CD4-positive, alpha-beta T cell (primary cell): ENCODE measurements at regions of chr17 and their contacts with region 1.

Region 1: GRCh38 chr17:77444984-77445759 is 304.4 kb downstream of the SEC14L1 start:
- DNase-seq: peak; percentile 72 to 97 (median 83)
- ATAC-seq: peak; percentile 68
- H3K4me3 ChIP-seq: peak overlapping the region; percentile 55
- H3K4me3 Mint-ChIP-seq: peak overlapping the region; percentile 89
- H3K27ac ChIP-seq: peak overlapping the region; percentile 73 to 98
- H3K27ac Mint-ChIP-seq: peak overlapping the region; percentile 93
- H3K4me1 ChIP-seq: peaks cover 100% of the 10 kb centered on the region
- H3K4me1 Mint-ChIP-seq: peaks cover 98% of the 10 kb centered on the region
- H3K27me3 ChIP-seq: no peaks in the 10 kb centered on the region
- H3K27me3 Mint-ChIP-seq: no peaks in the 10 kb centered on the region
- CTCF ChIP-seq: no peak

Region 2: DNA sequence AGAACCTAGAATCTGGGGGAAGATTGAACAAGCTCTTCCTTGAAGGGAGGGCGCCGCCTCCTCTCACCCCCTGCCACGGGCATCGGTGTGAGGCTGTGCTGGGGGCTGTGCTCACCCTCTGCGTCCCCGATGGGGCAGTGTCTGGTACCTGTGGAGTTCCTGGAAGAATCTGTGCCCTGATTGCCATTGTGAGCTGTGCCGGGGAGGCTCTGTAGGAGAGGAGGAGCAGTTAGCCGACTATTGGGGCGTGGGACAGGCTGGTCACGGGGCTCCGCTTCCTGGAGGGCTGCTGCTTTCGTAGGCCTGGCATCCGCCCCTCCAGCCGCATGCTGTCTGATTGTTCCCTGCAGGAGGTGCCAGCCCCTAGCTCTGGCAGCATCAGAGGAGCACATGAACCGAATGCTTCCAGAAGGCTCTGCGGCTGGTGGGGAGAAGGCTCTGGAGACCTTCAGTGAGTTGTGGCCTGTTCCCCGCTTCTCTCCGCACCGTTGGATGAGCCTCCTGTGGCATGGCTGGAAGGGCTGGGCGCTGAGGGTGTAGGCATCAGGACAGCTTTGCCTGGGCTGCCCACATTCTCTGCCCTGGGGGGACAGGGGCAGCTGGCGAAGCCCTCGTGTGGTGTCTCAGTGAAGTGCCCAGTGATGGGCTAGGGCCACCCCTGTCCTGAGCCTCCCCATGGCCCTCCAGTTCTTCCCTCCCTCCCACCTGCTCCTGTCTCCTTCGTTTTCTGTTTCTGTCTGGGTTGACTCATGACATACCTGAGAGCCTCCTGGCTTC is 217.5 kb before region 1 on chr17:
- CTCF ChIA-PET with region 1: no interaction called
- POLR2A ChIA-PET with region 1: no interaction called
- intact Hi-C with region 1: no loop called
- DNase-seq: no peak
- ATAC-seq: no peak
- H3K4me3 ChIP-seq: no peak overlapping the region
- H3K4me3 Mint-ChIP-seq: no peak overlapping the region
- H3K27ac ChIP-seq: no peak overlapping the region
- H3K27ac Mint-ChIP-seq: no peak overlapping the region
- H3K4me1 ChIP-seq: no peaks in the 10 kb centered on the region
- H3K4me1 Mint-ChIP-seq: no peaks in the 10 kb centered on the region
- H3K27me3 ChIP-seq: no peaks in the 10 kb centered on the region
- H3K27me3 Mint-ChIP-seq: no peaks in the 10 kb centered on the region
- CTCF ChIP-seq: no peak

Region 3: GRCh38 chr17:77382966-77383612 is 62.1 kb before region 1 on chr17:
- CTCF ChIA-PET with region 1: no interaction called
- POLR2A ChIA-PET with region 1: interaction called, 27 read pairs
- intact Hi-C with region 1: no loop called
- DNase-seq: no peak
- ATAC-seq: peak; percentile 9
- H3K4me3 ChIP-seq: peak overlapping the region; percentile 41
- H3K4me3 Mint-ChIP-seq: peak overlapping the region; percentile 50
- H3K27ac ChIP-seq: peak overlapping the region in 1 of 2 donors; percentile 32
- H3K27ac Mint-ChIP-seq: peak overlapping the region; percentile 93
- H3K4me1 ChIP-seq: peaks cover 100% of the 10 kb centered on the region
- H3K4me1 Mint-ChIP-seq: peaks cover 93% of the 10 kb centered on the region
- H3K27me3 ChIP-seq: no peaks in the 10 kb centered on the region
- H3K27me3 Mint-ChIP-seq: no peaks in the 10 kb centered on the region
- CTCF ChIP-seq: no peak

Region 4: GRCh38 chr17:77429919-77430752 is 15.0 kb before region 1 on chr17:
- CTCF ChIA-PET with region 1: interaction called, 24 read pairs
- POLR2A ChIA-PET with region 1: interaction called, 526 read pairs
- intact Hi-C with region 1: no loop called
- DNase-seq: peak; percentile 75 to 90 (median 84)
- ATAC-seq: peak; percentile 46
- H3K4me3 ChIP-seq: no peak overlapping the region
- H3K4me3 Mint-ChIP-seq: peak overlapping the region; percentile 62
- H3K27ac ChIP-seq: peak overlapping the region in 1 of 2 donors; percentile 29
- H3K27ac Mint-ChIP-seq: peak overlapping the region; percentile 93
- H3K4me1 ChIP-seq: peaks cover 100% of the 10 kb centered on the region
- H3K4me1 Mint-ChIP-seq: peaks cover 93% of the 10 kb centered on the region
- H3K27me3 ChIP-seq: no peaks in the 10 kb centered on the region
- H3K27me3 Mint-ChIP-seq: no peaks in the 10 kb centered on the region
- CTCF ChIP-seq: peak; percentile 77

Region 5: DNA sequence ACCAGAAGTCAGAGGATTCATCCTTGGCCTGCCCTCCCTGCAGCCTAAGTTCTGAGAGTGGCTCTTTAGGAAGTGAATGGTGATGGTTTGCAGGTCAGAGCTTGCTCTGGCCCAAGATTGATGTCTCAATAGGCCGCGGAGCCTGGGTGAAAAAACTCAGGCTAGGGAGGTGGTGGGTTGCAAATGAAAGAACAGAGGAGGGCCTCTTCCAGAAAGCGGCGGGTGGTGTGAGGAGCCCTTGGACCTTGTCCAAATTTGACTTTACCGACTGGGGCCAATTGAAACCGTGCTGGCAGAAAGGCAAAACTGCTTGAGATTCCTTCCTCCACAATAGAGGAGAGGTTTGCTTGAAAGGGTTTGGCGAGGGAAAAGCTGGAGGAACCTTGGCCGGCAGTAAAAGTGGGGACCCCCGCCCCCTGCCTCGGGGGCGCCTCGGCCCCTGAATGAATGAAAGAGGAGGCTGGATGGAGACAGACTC is 26.9 kb after region 1 on chr17:
- CTCF ChIA-PET with region 1: interaction called, 4 read pairs
- POLR2A ChIA-PET with region 1: interaction called, 681 read pairs
- intact Hi-C with region 1: no loop called
- DNase-seq: no peak
- ATAC-seq: no peak
- H3K4me3 ChIP-seq: peak overlapping the region; percentile 25
- H3K4me3 Mint-ChIP-seq: peak overlapping the region; percentile 79
- H3K27ac ChIP-seq: peak overlapping the region; percentile 40 to 62
- H3K27ac Mint-ChIP-seq: peak overlapping the region; percentile 97
- H3K4me1 ChIP-seq: peaks cover 99% of the 10 kb centered on the region
- H3K4me1 Mint-ChIP-seq: peaks cover 96% of the 10 kb centered on the region
- H3K27me3 ChIP-seq: no peaks in the 10 kb centered on the region
- H3K27me3 Mint-ChIP-seq: no peaks in the 10 kb centered on the region
- CTCF ChIP-seq: no peak

Region 6: GRCh38 chr17:77516902-77517301 is 71.7 kb after region 1 on chr17:
- CTCF ChIA-PET with region 1: no interaction called
- POLR2A ChIA-PET with region 1: no interaction called
- intact Hi-C with region 1: no loop called
- DNase-seq: peak in 1 of 14 experiments; percentile 27
- ATAC-seq: peak; percentile 51
- H3K4me3 ChIP-seq: no peak overlapping the region
- H3K4me3 Mint-ChIP-seq: no peak overlapping the region
- H3K27ac ChIP-seq: no peak overlapping the region
- H3K27ac Mint-ChIP-seq: no peak overlapping the region
- H3K4me1 ChIP-seq: no peaks in the 10 kb centered on the region
- H3K4me1 Mint-ChIP-seq: no peaks in the 10 kb centered on the region
- H3K27me3 ChIP-seq: no peaks in the 10 kb centered on the region
- H3K27me3 Mint-ChIP-seq: no peaks in the 10 kb centered on the region
- CTCF ChIP-seq: no peak

Region 7: GRCh38 chr17:78128551-78129350 is 683.6 kb after region 1 on chr17 and contains the start of gene TMC6:
- CTCF ChIA-PET with region 1: no interaction called
- POLR2A ChIA-PET with region 1: interaction called, 15 read pairs
- intact Hi-C with region 1: loop called in 1 of 2 experiments (anchors 10 kb)
- DNase-seq: peak; percentile 58 to 89 (median 75)
- ATAC-seq: peak; percentile 43
- H3K4me3 ChIP-seq: peak within 1 kb of the TSS; percentile 94
- H3K4me3 Mint-ChIP-seq: peak within 1 kb of the TSS; percentile 100
- H3K27ac ChIP-seq: peak within 1 kb of the TSS; percentile 75 to 92
- H3K27ac Mint-ChIP-seq: peak within 1 kb of the TSS; percentile 96
- H3K4me1 ChIP-seq: peaks cover 76% of the 10 kb centered on the region
- H3K4me1 Mint-ChIP-seq: peaks cover 56% of the 10 kb centered on the region
- H3K27me3 ChIP-seq: no peaks in the 10 kb centered on the region
- H3K27me3 Mint-ChIP-seq: no peaks in the 10 kb centered on the region
- CTCF ChIP-seq: no peak
- total RNA-seq, gene TMC6: 645 to 659 TPM